ENCODE measurements at regions of chr4 and their contacts with region 1.

Region 1: GRCh38 chr4:25376754-25377571 is at the start of gene ANAPC4:
- DNase-seq: peak; percentile 66 to 95 (median 84)
- H3K4me3 ChIP-seq: peak within 1 kb of the TSS; percentile 59 to 99 (median 94)
- H3K27ac ChIP-seq: peak within 1 kb of the TSS in 53 of 59 donors; percentile 22 to 90 (median 74)
- H3K27me3 ChIP-seq: no peaks in the 10 kb centered on the region
- CTCF ChIP-seq: peak in 19 of 56 donors; percentile 5 to 56 (median 28)
- total RNA-seq, gene ANAPC4: 23.6 to 56.0 (median 39.8) TPM

Region 2: DNA sequence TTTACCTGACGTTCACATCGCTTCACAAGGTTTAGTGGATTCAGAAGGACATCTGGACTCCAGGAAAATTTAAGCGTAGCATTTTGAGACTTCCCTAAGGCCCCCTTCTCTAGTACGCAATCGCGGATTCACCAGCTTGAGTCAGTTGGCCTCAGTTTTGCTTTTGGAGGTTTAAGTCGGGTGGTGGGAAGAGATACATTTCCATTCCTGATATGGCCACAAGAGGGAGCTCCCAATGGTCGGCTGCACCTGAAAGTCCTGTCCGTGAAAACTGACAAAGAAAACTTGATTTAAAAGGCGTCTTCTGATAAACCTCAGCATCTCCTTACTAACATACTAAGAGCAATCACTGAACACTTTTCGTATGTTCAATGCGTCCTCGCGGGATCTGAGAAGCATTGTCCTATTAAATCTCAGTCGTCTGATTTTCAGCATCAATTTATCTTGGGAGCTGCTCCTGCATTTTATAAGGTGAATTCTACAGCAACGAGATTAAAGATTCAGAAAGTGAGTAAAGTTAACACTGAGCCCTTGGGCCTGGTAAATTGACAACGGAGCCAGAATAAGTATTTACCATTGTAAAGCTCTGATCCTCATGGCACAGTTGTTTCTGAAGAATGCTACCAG is 396.8 kb before region 1 on chr4:
- intact Hi-C with region 1: loop called in 1 of 2 experiments (anchors 10 kb)
- DNase-seq: peak in 7 of 10 donors; percentile 35 to 68 (median 51)
- H3K4me3 ChIP-seq: peak overlapping the region in 58 of 59 donors; percentile 6 to 63 (median 36)
- H3K27ac ChIP-seq: peak overlapping the region in 49 of 59 donors; percentile 0 to 89 (median 66)
- H3K27me3 ChIP-seq: no peaks in the 10 kb centered on the region
- CTCF ChIP-seq: peak; percentile 67 to 96 (median 89)

Region 3: DNA sequence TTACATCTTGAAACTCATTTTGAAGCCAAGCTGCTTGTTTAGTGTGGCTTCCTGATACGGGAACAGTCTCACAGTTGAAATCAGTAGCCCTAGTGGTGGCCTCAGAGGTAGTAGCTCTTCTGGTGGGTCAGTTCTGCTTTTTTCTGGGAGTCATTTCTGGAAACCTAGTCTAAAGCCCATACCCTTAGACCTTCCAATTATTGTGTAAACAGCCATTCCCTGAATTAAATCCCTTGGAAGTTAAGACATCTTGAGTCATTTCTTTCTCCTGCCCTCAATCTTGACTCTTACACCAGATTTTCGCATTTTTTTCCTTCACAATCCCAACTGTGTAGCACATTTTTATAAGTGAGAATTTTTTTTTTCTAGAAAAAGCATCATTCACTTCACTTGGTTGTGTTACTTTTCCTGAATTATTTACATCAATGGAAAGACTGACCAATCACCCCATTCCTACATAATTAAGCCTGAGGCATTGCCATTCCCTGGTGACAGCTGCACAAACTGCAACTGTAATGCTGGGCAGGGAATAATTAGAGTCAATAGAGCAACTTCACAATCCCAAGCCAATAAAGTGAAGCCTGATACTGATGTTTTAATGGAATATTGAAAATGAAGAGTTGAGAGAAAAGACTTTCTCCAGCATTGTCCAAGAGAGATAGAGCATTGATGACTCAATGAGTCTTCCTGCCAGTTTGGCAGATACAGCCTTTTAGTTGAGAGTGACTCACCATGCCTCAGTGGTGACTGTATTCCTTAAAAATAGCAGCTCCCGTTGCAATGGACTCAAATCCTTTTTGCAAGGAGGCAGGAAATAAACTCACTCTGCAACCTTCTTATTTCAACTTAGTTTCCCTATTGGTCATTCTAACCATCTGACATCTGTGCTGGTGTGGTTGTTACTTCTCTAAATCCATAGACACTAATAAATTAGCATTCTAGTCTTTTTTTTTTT is 203.7 kb before region 1 on chr4:
- intact Hi-C with region 1: loop called in 1 of 2 experiments (anchors 10 kb)
- DNase-seq: peak in 1 of 10 donors; percentile 65
- H3K4me3 ChIP-seq: peak overlapping the region in 1 of 59 donors; percentile 2
- H3K27ac ChIP-seq: peak overlapping the region in 43 of 59 donors; percentile 2 to 78 (median 50)
- H3K27me3 ChIP-seq: no peaks in the 10 kb centered on the region
- CTCF ChIP-seq: no peak

Region 4: GRCh38 chr4:25312496-25313200 is 64.3 kb before region 1 on chr4 and contains the start of gene ZCCHC4:
- intact Hi-C with region 1: loop called in 1 of 2 experiments (anchors 2 kb)
- DNase-seq: peak; percentile 84 to 93 (median 89)
- H3K4me3 ChIP-seq: peak within 1 kb of the TSS; percentile 49 to 93 (median 78)
- H3K27ac ChIP-seq: peak within 1 kb of the TSS in 44 of 59 donors; percentile 5 to 85 (median 61)
- H3K27me3 ChIP-seq: no peaks in the 10 kb centered on the region
- CTCF ChIP-seq: peak; percentile 96 to 100 (median 100)
- total RNA-seq, gene ZCCHC4: 5.8 to 15.6 (median 10.8) TPM

Region 5: DNA sequence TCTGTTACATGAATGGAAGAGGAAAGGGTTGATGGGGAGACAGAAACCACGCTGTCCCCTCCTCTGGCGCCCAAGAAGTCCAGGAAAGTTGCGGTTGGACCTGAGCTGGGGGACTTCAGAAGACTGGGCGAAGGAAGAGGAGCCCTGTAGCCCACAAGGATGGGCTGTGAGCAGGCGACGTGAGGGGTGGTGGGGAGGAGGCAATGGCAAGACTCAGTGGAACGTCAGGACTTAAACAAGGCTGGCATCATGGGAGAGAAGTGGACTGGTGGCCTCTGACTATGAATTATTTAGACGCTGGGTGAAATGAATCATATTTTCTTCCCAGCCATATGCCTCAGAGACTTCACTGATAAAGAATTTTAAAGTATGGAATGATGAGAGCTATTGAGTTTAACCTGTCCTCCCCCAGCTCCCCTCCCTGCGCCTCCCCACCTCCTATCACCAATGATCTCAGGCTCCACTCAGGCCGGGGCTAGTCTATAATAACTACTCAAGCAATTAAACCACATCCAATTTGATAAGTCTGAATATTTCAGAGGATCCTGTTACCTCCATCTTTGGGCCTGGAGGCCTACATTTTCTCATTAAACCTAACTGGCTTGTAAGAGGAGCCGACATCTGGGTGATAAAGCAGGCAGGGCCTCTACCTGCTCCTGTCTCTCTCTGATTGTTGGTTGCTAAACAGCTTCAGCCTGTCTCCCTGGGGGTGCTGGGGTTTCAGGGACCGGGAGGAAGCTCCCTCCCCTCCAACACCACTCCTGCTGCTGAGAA is 600.6 kb after region 1 on chr4:
- intact Hi-C with region 1: no loop called
- DNase-seq: no peak
- H3K4me3 ChIP-seq: no peak overlapping the region
- H3K27ac ChIP-seq: no peak overlapping the region
- H3K27me3 ChIP-seq: no peaks in the 10 kb centered on the region
- CTCF ChIP-seq: no peak

Measured in dorsolateral prefrontal cortex (tissue), 120 donors.